B cell (primary cell): ENCODE measurements at regions of chr16 and their contacts with region 1.

Region 1: GRCh38 chr16:70454222-70455034 is at the start of gene FCSK:
- DNase-seq: peak; percentile 91
- ATAC-seq: peak; percentile 96
- H3K4me3 ChIP-seq: peak within 1 kb of the TSS; percentile 79 to 97 (median 89)
- H3K4me3 Mint-ChIP-seq: peak within 1 kb of the TSS; percentile 94
- H3K27ac ChIP-seq: peak within 1 kb of the TSS; percentile 94 to 97
- H3K27ac Mint-ChIP-seq: peak within 1 kb of the TSS; percentile 92
- H3K4me1 ChIP-seq: peaks cover 10 to 17% of the 10 kb centered on the region in 2 donors
- H3K4me1 Mint-ChIP-seq: peaks cover 20% of the 10 kb centered on the region
- H3K27me3 ChIP-seq: no peaks in the 10 kb centered on the region
- H3K27me3 Mint-ChIP-seq: peaks cover 5% of the 10 kb centered on the region
- CTCF ChIP-seq: peak; percentile 40
- total RNA-seq, gene FCSK: 24.8 and 24.9 TPM in 2 replicates

Region 2: DNA sequence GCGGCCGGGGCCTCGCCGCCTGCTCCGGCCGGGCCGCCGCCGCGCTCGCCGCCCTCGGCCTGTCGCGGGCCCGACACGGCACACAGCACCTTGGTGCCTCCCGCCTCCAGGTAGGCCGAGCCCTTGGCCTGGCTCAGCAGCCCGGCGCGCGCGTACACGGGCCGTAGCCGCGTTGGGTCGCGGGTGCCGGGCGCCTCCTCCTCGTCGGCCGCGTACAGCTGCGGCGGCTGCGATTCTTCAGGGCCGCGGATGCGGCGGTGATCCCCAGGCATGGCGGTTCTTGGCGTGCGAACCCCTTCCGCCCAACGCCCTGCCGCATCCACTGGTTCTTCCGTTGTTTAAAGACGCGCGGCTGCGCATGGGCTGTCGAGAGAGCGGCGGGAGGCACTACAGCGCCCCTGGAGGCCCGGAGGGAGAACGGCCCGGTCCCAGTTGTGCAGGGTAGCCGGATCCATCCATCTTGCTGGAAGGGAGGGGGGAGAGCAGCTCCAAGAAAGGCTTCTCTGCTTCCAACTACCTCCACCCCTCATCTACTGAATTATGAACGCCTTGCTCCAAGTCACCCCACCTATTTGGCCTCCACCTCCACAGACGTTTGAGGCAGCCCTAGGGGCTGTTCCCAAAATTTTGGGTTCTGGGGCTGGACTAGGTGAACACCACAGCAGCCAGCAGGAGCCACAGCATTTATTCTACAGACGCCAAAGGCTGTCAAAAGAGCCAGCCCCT is 202.6 kb before region 1 on chr16 and contains the start of gene EXOSC6:
- CTCF ChIA-PET with region 1: no interaction called
- POLR2A ChIA-PET with region 1: no interaction called
- intact Hi-C with region 1: loop called (anchors 5 kb)
- DNase-seq: peak; percentile 96
- ATAC-seq: peak; percentile 97
- H3K4me3 ChIP-seq: peak within 1 kb of the TSS; percentile 19 to 76 (median 65)
- H3K4me3 Mint-ChIP-seq: peak within 1 kb of the TSS; percentile 90
- H3K27ac ChIP-seq: peak within 1 kb of the TSS; percentile 38 to 78
- H3K27ac Mint-ChIP-seq: peak within 1 kb of the TSS; percentile 98
- H3K4me1 ChIP-seq: peaks cover 0 to 24% of the 10 kb centered on the region in 2 donors
- H3K4me1 Mint-ChIP-seq: peaks cover 14% of the 10 kb centered on the region
- H3K27me3 ChIP-seq: no peaks in the 10 kb centered on the region
- H3K27me3 Mint-ChIP-seq: no peaks in the 10 kb centered on the region
- CTCF ChIP-seq: peak; percentile 92
- total RNA-seq, gene EXOSC6: 41.8 and 42.3 TPM in 2 replicates

Region 3: DNA sequence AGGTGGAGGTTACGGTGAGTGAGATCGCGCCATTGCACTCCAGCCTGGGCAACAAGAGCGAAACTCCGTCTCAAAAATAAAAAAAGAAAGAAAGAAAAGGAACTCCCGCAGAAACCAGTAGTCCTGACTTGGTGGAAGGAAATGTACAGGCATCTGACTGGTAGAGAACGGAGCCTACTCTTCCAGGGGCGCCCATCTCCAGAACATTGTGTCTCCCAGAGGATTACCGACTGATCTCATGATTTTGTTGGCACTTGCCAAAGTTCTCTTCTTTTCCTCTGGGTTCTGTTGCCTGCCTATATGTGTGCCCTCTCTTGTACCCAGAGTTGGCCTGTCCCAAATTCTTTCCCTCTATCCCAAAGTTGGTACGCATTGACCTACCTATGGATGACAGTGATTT is 83.5 kb before region 1 on chr16:
- CTCF ChIA-PET with region 1: interaction called, 12 read pairs
- POLR2A ChIA-PET with region 1: interaction called, 7 read pairs
- intact Hi-C with region 1: no loop called
- DNase-seq: no peak
- ATAC-seq: no peak
- H3K4me3 ChIP-seq: no peak overlapping the region
- H3K4me3 Mint-ChIP-seq: no peak overlapping the region
- H3K27ac ChIP-seq: no peak overlapping the region
- H3K27ac Mint-ChIP-seq: no peak overlapping the region
- H3K4me1 ChIP-seq: no peaks in the 10 kb centered on the region
- H3K4me1 Mint-ChIP-seq: no peaks in the 10 kb centered on the region
- H3K27me3 ChIP-seq: no peaks in the 10 kb centered on the region
- H3K27me3 Mint-ChIP-seq: no peaks in the 10 kb centered on the region
- CTCF ChIP-seq: no peak

Region 4: GRCh38 chr16:70395345-70395901 is 59.0 kb before region 1 on chr16:
- CTCF ChIA-PET with region 1: interaction called, 12 read pairs
- POLR2A ChIA-PET with region 1: interaction called, 3 read pairs
- intact Hi-C with region 1: no loop called
- DNase-seq: peak; percentile 71
- ATAC-seq: peak; percentile 88
- H3K4me3 ChIP-seq: no peak overlapping the region
- H3K4me3 Mint-ChIP-seq: no peak overlapping the region
- H3K27ac ChIP-seq: no peak overlapping the region
- H3K27ac Mint-ChIP-seq: no peak overlapping the region
- H3K4me1 ChIP-seq: peaks cover 0 to 5% of the 10 kb centered on the region in 2 donors
- H3K4me1 Mint-ChIP-seq: peaks cover 4% of the 10 kb centered on the region
- H3K27me3 ChIP-seq: no peaks in the 10 kb centered on the region
- H3K27me3 Mint-ChIP-seq: no peaks in the 10 kb centered on the region
- CTCF ChIP-seq: peak; percentile 74

Region 5: DNA sequence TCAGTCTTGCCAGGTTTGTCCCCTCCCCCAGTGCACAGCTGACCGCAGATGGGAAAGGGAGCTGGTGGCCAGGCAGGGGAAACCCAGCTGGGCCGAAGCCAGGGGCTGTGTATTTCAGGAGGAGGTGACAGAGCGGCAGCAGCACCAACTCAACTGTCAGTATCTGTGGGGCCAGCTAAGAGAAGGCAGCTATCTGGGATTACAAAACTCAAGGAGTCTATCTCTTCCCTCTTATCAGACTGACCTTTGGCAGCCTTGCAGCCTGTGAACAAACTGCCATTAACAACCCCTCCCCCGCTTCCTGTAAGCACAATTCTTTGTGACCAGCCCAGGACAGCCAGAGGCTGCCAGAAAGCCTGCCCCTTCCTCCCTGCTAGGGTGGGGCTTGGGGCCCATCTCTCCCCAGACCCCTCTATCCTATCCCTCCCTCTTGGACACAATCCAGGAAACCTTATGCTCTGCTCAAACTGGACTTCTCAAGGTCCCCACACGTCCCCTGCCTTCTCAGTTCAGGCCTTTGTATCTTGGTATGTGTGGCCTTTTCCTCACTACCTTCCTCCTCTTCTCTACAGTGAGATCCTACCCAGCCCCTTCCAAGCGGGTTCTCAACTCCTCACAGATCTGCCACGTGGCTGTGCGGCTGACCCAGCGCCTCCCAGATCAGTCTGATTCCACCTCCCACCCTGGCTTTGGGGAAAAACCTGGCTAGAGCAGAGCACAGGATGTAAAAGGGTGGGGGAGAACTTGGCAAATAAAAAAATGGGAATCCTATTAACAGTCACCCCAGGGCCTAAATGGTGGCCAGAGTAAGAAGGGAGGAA is 26.0 kb before region 1 on chr16:
- CTCF ChIA-PET with region 1: interaction called, 5 read pairs
- POLR2A ChIA-PET with region 1: interaction called, 13 read pairs
- intact Hi-C with region 1: loop called (anchors 1 kb)
- DNase-seq: peak; percentile 40
- ATAC-seq: no peak
- H3K4me3 ChIP-seq: no peak overlapping the region
- H3K4me3 Mint-ChIP-seq: peak overlapping the region; percentile 49
- H3K27ac ChIP-seq: peak overlapping the region; percentile 39 to 63
- H3K27ac Mint-ChIP-seq: peak overlapping the region; percentile 66
- H3K4me1 ChIP-seq: peaks cover 52 to 57% of the 10 kb centered on the region in 2 donors
- H3K4me1 Mint-ChIP-seq: peaks cover 58% of the 10 kb centered on the region
- H3K27me3 ChIP-seq: no peaks in the 10 kb centered on the region
- H3K27me3 Mint-ChIP-seq: no peaks in the 10 kb centered on the region
- CTCF ChIP-seq: no peak